B cell (primary cell): ENCODE measurements at regions of chr1 and their contacts with region 1.

Region 1: DNA sequence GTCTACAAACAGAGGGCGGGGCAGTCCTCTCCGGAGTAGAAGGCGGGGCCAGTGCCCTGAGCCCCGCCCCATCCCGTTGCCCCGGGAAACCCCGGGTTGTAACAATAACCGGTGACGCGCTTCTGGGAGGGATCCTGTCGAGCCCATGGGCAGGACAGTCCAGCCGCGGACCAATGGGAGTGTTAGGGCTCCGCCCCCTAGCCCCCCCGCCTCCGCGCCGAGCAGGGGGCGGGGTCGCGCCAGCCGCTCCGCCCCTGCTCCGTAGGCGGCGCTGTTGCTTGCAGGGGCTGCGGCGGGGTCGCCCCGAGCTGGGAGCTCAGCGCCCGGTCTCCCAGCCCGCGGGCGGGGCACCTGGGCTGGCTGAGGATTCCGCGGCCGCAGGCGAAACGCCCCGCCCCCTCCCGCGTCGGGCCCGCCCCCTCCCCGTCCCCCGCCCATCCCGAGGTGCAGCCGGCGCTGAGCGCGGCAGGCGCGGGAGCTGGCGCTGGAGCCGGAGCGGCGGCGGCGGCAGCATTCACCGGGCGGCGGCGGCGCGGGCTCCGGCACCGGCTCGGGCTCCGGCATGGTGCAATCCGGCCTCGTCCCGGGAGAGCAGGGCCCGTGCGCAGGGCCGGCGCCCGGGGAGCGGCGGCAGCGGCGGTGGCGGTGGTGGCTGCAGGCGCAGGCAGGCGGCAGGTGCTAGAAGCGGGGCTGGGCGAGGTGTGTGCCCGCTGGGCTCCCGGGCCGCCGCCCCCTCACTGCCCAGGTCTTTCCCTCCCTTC is at the start of gene FOXO6:
- DNase-seq: peak; percentile 97
- ATAC-seq: peak; percentile 93
- H3K4me3 ChIP-seq: peak within 1 kb of the TSS in 4 of 5 experiments; percentile 32 to 63 (median 49)
- H3K4me3 Mint-ChIP-seq: peak within 1 kb of the TSS; percentile 80
- H3K27ac ChIP-seq: peak within 1 kb of the TSS in 1 of 2 donors; percentile 58
- H3K27ac Mint-ChIP-seq: peak within 1 kb of the TSS; percentile 48
- H3K4me1 ChIP-seq: peaks cover 25 to 33% of the 10 kb centered on the region in 2 donors
- H3K4me1 Mint-ChIP-seq: peaks cover 29% of the 10 kb centered on the region
- H3K27me3 ChIP-seq: peaks cover 0 to 63% (median 21%) of the 10 kb centered on the region in 4 experiments
- H3K27me3 Mint-ChIP-seq: peaks cover 35% of the 10 kb centered on the region
- CTCF ChIP-seq: peak; percentile 48
- total RNA-seq, gene FOXO6: 0.15 and 0.17 TPM in 2 replicates

Region 2: GRCh38 chr1:41241782-41242341 is 119.3 kb before region 1 on chr1 and contains the start of gene SCMH1:
- CTCF ChIA-PET with region 1: no interaction called
- POLR2A ChIA-PET with region 1: no interaction called
- intact Hi-C with region 1: loop called (anchors 5 kb)
- DNase-seq: peak; percentile 71
- ATAC-seq: peak; percentile 63
- H3K4me3 ChIP-seq: peak within 1 kb of the TSS; percentile 28 to 79 (median 62)
- H3K4me3 Mint-ChIP-seq: peak within 1 kb of the TSS; percentile 88
- H3K27ac ChIP-seq: peak within 1 kb of the TSS; percentile 65 to 67
- H3K27ac Mint-ChIP-seq: peak within 1 kb of the TSS; percentile 85
- H3K4me1 ChIP-seq: peaks cover 11 to 16% of the 10 kb centered on the region in 2 donors
- H3K4me1 Mint-ChIP-seq: peaks cover 19% of the 10 kb centered on the region
- H3K27me3 ChIP-seq: no peaks in the 10 kb centered on the region
- H3K27me3 Mint-ChIP-seq: no peaks in the 10 kb centered on the region
- CTCF ChIP-seq: no peak
- total RNA-seq, gene SCMH1: 27.1 and 29.4 TPM in 2 replicates

Region 3: DNA sequence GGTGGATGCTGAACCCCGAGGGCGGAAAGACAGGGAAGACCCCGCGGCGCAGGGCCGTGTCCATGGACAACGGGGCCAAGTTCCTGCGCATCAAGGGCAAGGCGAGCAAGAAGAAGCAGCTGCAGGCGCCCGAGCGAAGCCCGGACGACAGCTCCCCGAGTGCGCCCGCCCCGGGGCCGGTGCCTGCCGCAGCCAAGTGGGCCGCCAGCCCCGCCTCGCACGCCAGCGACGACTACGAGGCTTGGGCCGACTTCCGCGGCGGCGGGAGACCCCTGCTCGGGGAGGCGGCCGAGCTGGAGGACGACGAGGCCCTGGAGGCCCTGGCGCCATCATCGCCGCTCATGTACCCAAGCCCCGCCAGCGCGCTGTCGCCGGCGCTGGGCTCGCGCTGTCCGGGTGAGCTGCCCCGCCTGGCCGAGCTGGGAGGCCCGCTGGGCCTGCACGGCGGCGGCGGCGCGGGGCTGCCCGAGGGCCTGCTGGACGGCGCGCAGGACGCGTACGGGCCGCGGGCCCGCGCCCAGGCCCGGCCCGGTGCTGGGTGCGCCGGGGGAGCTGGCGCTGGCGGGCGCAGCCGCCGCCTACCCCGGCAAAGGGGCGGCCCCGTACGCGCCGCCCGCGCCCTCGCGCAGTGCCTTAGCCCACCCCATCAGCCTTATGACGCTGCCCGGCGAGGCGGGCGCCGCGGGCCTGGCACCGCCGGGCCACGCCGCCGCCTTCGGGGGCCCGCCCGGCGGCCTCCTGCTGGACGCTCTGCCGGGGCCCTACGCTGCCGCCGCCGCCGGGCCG is 20.7 kb after region 1 on chr1:
- CTCF ChIA-PET with region 1: interaction called, 4 read pairs
- POLR2A ChIA-PET with region 1: interaction called, 4 read pairs
- intact Hi-C with region 1: loop called (anchors 2 kb)
- DNase-seq: peak; percentile 54
- ATAC-seq: peak; percentile 68
- H3K4me3 ChIP-seq: peak overlapping the region in 3 of 5 experiments; percentile 41 to 46 (median 42)
- H3K4me3 Mint-ChIP-seq: peak overlapping the region; percentile 91
- H3K27ac ChIP-seq: no peak overlapping the region
- H3K27ac Mint-ChIP-seq: peak overlapping the region; percentile 56
- H3K4me1 ChIP-seq: peaks cover 19 to 33% of the 10 kb centered on the region in 2 donors
- H3K4me1 Mint-ChIP-seq: peaks cover 24% of the 10 kb centered on the region
- H3K27me3 ChIP-seq: peaks cover 0 to 73% (median 23%) of the 10 kb centered on the region in 4 experiments
- H3K27me3 Mint-ChIP-seq: peaks cover 65% of the 10 kb centered on the region
- CTCF ChIP-seq: no peak

Region 4: DNA sequence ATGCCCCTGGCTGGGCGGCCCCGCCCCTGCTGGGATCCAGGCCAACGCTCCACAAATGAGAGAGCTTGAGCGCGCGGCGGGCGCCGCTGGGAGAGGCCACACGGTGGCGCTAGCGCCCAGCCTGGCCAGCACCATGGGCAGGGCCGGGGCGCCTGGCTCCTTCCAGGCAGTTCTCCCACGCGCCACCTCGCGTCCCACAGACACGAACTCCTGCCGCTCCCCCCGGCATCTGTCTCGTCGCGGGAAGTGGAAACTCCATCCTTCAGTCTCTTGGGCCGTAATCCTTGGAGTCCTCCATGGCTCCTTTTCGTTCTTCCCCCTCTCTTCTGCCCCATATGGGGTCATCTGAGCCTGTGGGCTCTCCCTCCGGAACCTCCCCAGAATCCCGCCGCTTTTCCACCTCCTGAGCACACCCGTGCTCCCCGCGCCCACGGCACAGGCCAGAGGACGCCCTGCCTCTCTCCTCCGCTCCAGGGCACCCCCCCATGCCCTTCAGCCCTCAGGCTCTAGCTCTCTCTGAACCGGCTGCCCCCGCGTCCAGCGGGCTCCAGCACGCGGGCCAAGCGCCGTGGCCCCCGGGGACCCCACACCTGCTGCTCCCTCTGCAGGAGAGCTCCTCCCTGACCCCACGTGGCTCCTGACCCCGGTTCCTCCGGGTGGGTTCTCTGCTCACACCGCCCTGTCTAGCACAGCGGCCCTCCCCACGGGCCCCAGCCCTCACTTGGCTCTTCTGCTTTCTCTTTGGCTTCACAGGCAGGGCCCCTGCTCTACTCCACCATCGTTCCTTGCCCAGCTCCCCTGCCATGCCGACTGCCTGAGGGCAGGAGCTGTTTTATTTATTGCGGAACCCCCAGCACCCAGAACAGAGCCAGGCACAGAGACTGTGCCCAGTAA is 155.2 kb after region 1 on chr1:
- CTCF ChIA-PET with region 1: no interaction called
- POLR2A ChIA-PET with region 1: no interaction called
- intact Hi-C with region 1: no loop called
- DNase-seq: peak; percentile 77
- ATAC-seq: peak; percentile 87
- H3K4me3 ChIP-seq: peak overlapping the region in 4 of 5 experiments; percentile 48 to 59 (median 53)
- H3K4me3 Mint-ChIP-seq: peak overlapping the region; percentile 87
- H3K27ac ChIP-seq: no peak overlapping the region
- H3K27ac Mint-ChIP-seq: peak overlapping the region; percentile 37
- H3K4me1 ChIP-seq: peaks cover 25 to 39% of the 10 kb centered on the region in 2 donors
- H3K4me1 Mint-ChIP-seq: peaks cover 35% of the 10 kb centered on the region
- H3K27me3 ChIP-seq: no peaks in the 10 kb centered on the region
- H3K27me3 Mint-ChIP-seq: no peaks in the 10 kb centered on the region
- CTCF ChIP-seq: peak; percentile 95